Endothelial cell of umbilical vein (primary cell): ENCODE measurements at regions of chr12 and their contacts with region 1.

Region 1: GRCh38 chr12:68831272-68831671 is 23.3 kb downstream of the MDM2 start:
- DNase-seq: no peak
- H3K4me3 ChIP-seq: no peak overlapping the region
- H3K27ac ChIP-seq: no peak overlapping the region
- H3K4me1 ChIP-seq: peaks cover 4% of the 10 kb centered on the region
- H3K27me3 ChIP-seq: no peaks in the 10 kb centered on the region
- CTCF ChIP-seq: no peak
- POLR2A ChIP-seq: no peak

Region 2: GRCh38 chr12:68815232-68815927 is 15.9 kb before region 1 on chr12:
- CTCF ChIA-PET with region 1: interaction called, 20 read pairs
- POLR2A ChIA-PET with region 1: interaction called, 5 read pairs
- dilution Hi-C with region 1: no loop called
- intact Hi-C with region 1: no loop called
- DNase-seq: no peak
- H3K4me3 ChIP-seq: peak overlapping the region in 1 of 3 experiments; percentile 84
- H3K27ac ChIP-seq: no peak overlapping the region
- H3K4me1 ChIP-seq: peaks cover 5% of the 10 kb centered on the region
- H3K27me3 ChIP-seq: no peaks in the 10 kb centered on the region
- CTCF ChIP-seq: no peak
- POLR2A ChIP-seq: no peak

Region 3: DNA sequence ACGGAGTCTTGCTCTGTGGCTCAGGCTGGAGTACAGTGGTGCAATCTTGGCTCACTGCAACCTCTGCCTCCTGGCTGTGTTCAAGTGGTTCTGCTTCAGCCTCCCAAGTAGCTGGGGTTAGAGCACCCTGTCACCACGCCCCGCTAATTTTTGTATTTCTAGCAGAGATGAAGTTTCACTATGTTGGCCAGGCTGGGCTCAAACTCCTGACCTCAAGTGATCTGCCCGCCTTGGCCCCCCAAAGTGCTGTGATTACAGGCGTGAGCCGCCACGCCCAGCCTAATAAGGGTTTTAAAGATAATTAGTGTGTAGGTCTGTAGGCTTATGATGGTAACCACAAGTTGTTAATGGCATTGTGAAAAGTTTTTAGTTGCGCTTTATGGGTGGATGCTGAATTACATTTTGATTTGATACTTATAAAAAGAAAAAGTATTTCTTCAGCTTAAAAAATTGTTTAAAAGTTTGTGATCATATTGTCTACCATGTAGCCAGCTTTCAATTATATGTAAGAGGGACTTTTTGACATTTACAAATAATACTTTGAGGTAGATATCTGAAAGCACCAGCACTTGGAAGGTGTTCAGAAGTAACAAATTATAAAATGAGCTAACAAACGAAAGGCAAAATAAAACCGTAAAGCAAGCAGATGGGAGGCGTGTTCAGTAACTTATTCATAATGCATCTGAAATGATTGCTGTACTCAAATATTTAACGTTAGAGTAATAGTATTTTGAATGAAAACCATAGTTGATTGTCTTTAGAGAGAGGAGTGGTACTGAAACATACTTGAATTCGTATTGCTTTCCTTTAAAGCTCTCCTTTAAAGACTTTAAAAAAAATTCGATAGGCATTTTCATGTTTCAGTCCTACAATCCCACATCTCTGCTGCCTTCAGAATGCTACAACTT is 13.8 kb after region 1 on chr12:
- CTCF ChIA-PET with region 1: interaction called, 20 read pairs
- POLR2A ChIA-PET with region 1: no interaction called
- dilution Hi-C with region 1: no loop called
- intact Hi-C with region 1: no loop called
- DNase-seq: no peak
- H3K4me3 ChIP-seq: no peak overlapping the region
- H3K27ac ChIP-seq: no peak overlapping the region
- H3K4me1 ChIP-seq: no peaks in the 10 kb centered on the region
- H3K27me3 ChIP-seq: no peaks in the 10 kb centered on the region
- CTCF ChIP-seq: no peak
- POLR2A ChIP-seq: no peak